Common myeloid progenitor, CD34-positive (primary cell): ENCODE measurements at regions of chr7 and their contacts with region 1.

Region 1: DNA sequence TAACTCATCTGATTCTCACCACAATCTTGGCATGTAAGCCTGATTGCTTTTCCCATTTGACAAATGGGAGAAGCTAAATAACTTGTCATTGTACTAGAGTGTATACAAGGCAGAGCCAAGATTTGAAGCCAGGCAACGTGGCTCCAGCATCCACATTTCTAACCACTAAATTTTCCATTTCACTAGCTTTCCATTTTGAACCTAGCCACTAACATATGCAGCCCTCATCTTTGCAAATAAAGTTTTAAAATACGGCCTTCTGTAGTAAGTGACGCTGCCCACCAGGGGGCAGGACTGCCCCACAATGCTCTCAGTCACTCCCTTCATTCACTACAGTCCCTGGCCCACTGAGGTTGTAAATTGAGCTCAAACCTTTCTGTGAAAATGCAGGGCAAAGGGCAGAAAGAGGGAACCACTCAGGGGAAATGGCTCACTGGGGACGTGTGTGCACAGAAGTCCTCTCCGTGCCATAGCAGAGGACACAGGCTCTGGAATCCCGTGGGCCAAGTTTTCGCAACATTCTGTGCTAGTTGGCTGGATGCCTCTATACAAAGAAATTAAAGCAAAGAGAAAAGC is 315.7 kb downstream of the TNS3 start:
- DNase-seq: peak; percentile 46 to 79 (median 69)
- H3K4me3 ChIP-seq: no peak overlapping the region
- H3K27ac ChIP-seq: no peak overlapping the region
- H3K4me1 ChIP-seq: no peaks in the 10 kb centered on the region
- H3K27me3 ChIP-seq: no peaks in the 10 kb centered on the region

Region 2: DNA sequence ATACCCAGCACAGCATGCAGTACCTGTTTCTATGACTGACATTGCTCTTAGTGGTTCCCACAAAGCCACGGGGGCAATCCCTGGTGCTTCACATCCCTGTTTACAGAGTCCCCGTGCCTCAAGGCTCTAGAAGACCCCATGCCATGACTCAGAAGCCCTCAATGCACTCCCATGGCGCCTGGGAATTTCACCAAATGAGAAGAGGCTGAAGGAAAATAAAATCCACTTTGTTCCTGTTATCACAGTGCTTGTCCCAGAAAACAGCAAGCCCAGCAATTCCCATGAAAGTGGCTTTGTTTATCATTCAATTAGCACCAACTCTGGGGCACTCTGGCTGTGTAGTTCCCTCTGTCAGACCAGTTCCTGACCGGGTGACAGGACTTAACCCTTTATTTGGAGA is 47.3 kb after region 1 on chr7:
- CTCF ChIA-PET with region 1: no interaction called
- POLR2A ChIA-PET with region 1: no interaction called
- DNase-seq: no peak
- H3K4me3 ChIP-seq: no peak overlapping the region
- H3K27ac ChIP-seq: no peak overlapping the region
- H3K4me1 ChIP-seq: no peaks in the 10 kb centered on the region
- H3K27me3 ChIP-seq: no peaks in the 10 kb centered on the region

Region 3: DNA sequence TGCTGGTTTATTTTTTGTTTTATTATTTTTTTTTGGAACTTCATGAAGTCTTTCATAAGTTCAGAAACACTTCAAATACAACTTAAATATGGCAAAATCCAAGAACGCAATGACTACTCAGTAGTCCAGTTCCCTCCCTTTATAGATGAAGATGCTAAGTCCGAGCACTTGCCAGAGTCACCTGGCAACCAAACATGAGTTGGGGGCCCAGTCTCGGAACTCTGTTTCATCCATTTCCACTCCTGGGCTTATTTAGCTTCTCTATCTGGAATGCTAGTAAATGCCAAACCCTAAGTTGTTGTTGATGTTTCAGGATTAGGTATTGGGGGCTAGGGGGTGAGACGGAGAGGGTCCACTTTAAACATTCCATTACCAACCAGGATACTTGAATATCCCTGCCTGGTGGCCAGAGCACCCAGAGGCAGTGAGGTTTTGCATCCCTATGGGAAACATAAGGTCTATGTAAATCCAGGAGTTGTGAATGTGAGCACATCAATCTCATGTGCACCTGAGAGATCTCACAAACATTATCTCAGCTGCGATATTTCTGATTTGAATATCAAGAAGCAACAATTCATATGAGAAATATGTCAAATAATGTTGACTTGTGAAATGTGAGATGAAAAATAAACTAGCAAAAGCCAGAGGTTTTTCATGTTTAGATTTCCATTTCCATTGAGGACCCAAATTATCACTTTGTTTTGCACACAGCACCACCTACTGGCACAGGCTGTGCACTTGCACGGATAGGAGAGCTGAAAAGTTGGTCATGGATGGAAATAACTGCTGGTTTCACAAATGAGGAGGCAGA is 552.8 kb after region 1 on chr7:
- CTCF ChIA-PET with region 1: interaction called, 12 read pairs
- POLR2A ChIA-PET with region 1: no interaction called
- DNase-seq: peak; percentile 64 to 86 (median 79)
- H3K4me3 ChIP-seq: no peak overlapping the region
- H3K27ac ChIP-seq: no peak overlapping the region
- H3K4me1 ChIP-seq: peaks cover 0 to under 1% (median under 1%) of the 10 kb centered on the region in 4 experiments
- H3K27me3 ChIP-seq: no peaks in the 10 kb centered on the region

Region 4: DNA sequence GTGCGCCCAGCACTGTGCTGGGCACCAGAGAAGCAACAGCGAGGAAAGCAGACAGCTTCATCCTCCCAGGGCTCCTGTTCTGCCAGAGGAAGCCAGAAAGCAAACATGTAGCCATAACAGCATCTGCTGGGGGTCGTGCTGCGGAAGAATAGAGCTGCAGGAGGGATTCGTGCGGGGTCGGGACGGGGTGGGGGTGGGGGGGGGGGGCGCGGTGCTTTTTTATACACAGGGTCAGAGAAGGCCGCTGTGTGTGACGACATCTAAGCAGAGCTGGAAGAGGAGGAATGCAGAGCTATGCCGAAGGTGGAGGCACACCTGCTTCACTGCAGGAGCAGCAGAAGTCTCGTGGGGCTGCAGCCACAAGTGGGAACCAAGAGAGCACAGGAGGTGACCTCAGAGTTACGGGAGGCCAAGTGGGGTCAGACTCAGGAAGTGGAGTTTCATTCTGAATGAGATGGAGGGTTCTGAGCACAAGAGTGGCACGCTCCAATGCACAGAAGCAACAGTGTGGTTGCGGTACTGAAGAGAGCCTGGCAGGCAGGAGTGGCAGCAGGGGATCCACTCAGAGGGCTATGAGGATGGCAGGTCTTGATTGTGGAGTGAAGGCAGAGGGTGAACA is 671.0 kb after region 1 on chr7:
- CTCF ChIA-PET with region 1: interaction called, 20 read pairs
- POLR2A ChIA-PET with region 1: no interaction called
- DNase-seq: no peak
- H3K4me3 ChIP-seq: no peak overlapping the region
- H3K27ac ChIP-seq: no peak overlapping the region
- H3K4me1 ChIP-seq: no peaks in the 10 kb centered on the region
- H3K27me3 ChIP-seq: no peaks in the 10 kb centered on the region